ENCODE measurements at regions of chr3 and their contacts with region 1.

Region 1: GRCh38 chr3:56702490-56703315 is 19.6 kb upstream of the TASOR start:
- DNase-seq: peak; percentile 18 to 32
- ATAC-seq: peak; percentile 90 to 92
- H3K4me3 ChIP-seq: no peak overlapping the region
- H3K27ac ChIP-seq: no peak overlapping the region
- H3K4me1 ChIP-seq: no peaks in the 10 kb centered on the region
- H3K27me3 ChIP-seq: no peaks in the 10 kb centered on the region
- CTCF ChIP-seq: peak; percentile 80 to 93 (median 87)
- POLR2A ChIP-seq: no peak

Region 2: GRCh38 chr3:56980798-56981390 is 278.2 kb after region 1 on chr3:
- in situ Hi-C with region 1: loop called in 1 of 4 experiments (anchors 5 kb)
- intact Hi-C with region 1: no loop called
- DNase-seq: peak in 1 of 2 donors; percentile 21
- ATAC-seq: peak; percentile 60 to 65
- H3K4me3 ChIP-seq: no peak overlapping the region
- H3K27ac ChIP-seq: no peak overlapping the region
- H3K4me1 ChIP-seq: no peaks in the 10 kb centered on the region
- H3K27me3 ChIP-seq: no peaks in the 10 kb centered on the region
- CTCF ChIP-seq: no peak
- POLR2A ChIP-seq: no peak

Region 3: GRCh38 chr3:56988458-56989168 is 285.9 kb after region 1 on chr3:
- in situ Hi-C with region 1: loop called (anchors 5 kb)
- intact Hi-C with region 1: loop called (anchors 1 kb)
- DNase-seq: peak; percentile 54 to 68
- ATAC-seq: peak; percentile 89 to 90
- H3K4me3 ChIP-seq: no peak overlapping the region
- H3K27ac ChIP-seq: no peak overlapping the region
- H3K4me1 ChIP-seq: no peaks in the 10 kb centered on the region
- H3K27me3 ChIP-seq: no peaks in the 10 kb centered on the region
- CTCF ChIP-seq: peak; percentile 62 to 86 (median 77)
- POLR2A ChIP-seq: no peak

Measured in gastrocnemius medialis (tissue), 4 donors.